Activated CD4-positive, alpha-beta T cell treated with anti-CD3 and anti-CD28 coated beads, Interleukin-2, amount 10 ng/mL, durations not matched to agents 24 days and 14 days (primary cell): ENCODE measurements at regions of chr7 and their contacts with region 1.

Region 1: GRCh38 chr7:17063045-17063383 is 181.2 kb upstream of the AGR3 start:
- DNase-seq: no peak
- H3K4me3 Mint-ChIP-seq: no peak overlapping the region
- H3K27ac Mint-ChIP-seq: no peak overlapping the region
- H3K4me1 Mint-ChIP-seq: peaks cover 10% of the 10 kb centered on the region
- H3K27me3 Mint-ChIP-seq: no peaks in the 10 kb centered on the region

Region 2: GRCh38 chr7:17021180-17021579 is 41.8 kb before region 1 on chr7:
- intact Hi-C with region 1: no loop called
- DNase-seq: no peak
- H3K4me3 Mint-ChIP-seq: no peak overlapping the region
- H3K27ac Mint-ChIP-seq: no peak overlapping the region
- H3K4me1 Mint-ChIP-seq: peaks cover 11% of the 10 kb centered on the region
- H3K27me3 Mint-ChIP-seq: peaks cover 12% of the 10 kb centered on the region

Region 3: DNA sequence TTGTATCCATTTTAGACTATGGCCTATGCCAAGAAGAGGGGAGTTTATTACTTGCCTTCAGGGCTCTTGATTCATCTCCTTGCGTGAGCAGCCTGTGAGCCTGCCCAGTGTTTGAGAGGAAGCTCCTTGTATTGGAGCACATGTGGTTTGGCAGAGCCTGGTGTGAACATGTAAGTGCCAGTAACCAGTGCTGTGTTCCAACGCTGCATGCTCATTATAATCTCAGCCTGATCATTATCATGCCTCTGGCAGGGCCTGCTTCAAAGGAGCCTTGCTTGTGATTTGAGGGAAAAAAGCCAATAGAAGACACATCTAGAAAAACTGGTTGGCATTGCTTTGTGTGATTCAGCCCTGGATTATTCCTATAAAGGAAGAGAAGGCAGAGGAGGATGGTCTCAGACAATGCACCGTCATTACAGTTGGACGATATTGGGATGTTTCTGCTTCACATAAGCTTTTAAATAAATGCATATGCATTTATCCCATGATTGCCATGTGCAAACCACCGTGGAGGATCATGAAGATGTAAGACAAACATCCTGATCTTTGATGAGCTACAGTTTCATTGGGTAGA is 32.1 kb after region 1 on chr7:
- intact Hi-C with region 1: loop called (anchors 5 kb)
- DNase-seq: no peak
- H3K4me3 Mint-ChIP-seq: no peak overlapping the region
- H3K27ac Mint-ChIP-seq: no peak overlapping the region
- H3K4me1 Mint-ChIP-seq: no peaks in the 10 kb centered on the region
- H3K27me3 Mint-ChIP-seq: no peaks in the 10 kb centered on the region